ENCODE measurements at regions of chr2 and their contacts with region 1.

Region 1: GRCh38 chr2:37644242-37644641 is 27.2 kb downstream of the CDC42EP3 start:
- DNase-seq: no peak
- ATAC-seq: no peak
- H3K4me3 ChIP-seq: no peak overlapping the region
- H3K27ac ChIP-seq: no peak overlapping the region
- H3K4me1 ChIP-seq: no peaks in the 10 kb centered on the region
- H3K27me3 ChIP-seq: no peaks in the 10 kb centered on the region
- CTCF ChIP-seq: no peak

Region 2: GRCh38 chr2:37512971-37513370 is 131.3 kb before region 1 on chr2:
- CTCF ChIA-PET with region 1: no interaction called
- POLR2A ChIA-PET with region 1: interaction called, 10 read pairs
- in situ Hi-C with region 1: no loop called
- intact Hi-C with region 1: no loop called
- DNase-seq: no peak
- ATAC-seq: no peak
- H3K4me3 ChIP-seq: no peak overlapping the region
- H3K27ac ChIP-seq: no peak overlapping the region
- H3K4me1 ChIP-seq: no peaks in the 10 kb centered on the region
- H3K27me3 ChIP-seq: no peaks in the 10 kb centered on the region
- CTCF ChIP-seq: no peak